Aorta (tissue), 5 donors: ENCODE measurements at regions of chr1 and their contacts with region 1.

Region 1: GRCh38 chr1:202135221-202135721 is 9.3 kb downstream of the ARL8A start:
- DNase-seq: no peak
- ATAC-seq: peak; percentile 84
- H3K4me3 ChIP-seq: no peak overlapping the region
- H3K27ac ChIP-seq: peak overlapping the region in 1 of 2 donors; percentile 36
- H3K4me1 ChIP-seq: no peaks in the 10 kb centered on the region
- H3K27me3 ChIP-seq: no peaks in the 10 kb centered on the region

Region 2: GRCh38 chr1:201888282-201889089 is 246.8 kb before region 1 on chr1 and contains the start of gene SHISA4:
- intact Hi-C with region 1: loop called (anchors 10 kb)
- DNase-seq: peak; percentile 90 to 95
- ATAC-seq: peak; percentile 88
- H3K4me3 ChIP-seq: peak within 1 kb of the TSS; percentile 49 to 73
- H3K27ac ChIP-seq: peak within 1 kb of the TSS; percentile 14 to 85
- H3K4me1 ChIP-seq: peaks cover 0 to 4% of the 10 kb centered on the region in 2 donors
- H3K27me3 ChIP-seq: no peaks in the 10 kb centered on the region
- total RNA-seq, gene SHISA4: 30.6 to 39.9 TPM

Region 3: DNA sequence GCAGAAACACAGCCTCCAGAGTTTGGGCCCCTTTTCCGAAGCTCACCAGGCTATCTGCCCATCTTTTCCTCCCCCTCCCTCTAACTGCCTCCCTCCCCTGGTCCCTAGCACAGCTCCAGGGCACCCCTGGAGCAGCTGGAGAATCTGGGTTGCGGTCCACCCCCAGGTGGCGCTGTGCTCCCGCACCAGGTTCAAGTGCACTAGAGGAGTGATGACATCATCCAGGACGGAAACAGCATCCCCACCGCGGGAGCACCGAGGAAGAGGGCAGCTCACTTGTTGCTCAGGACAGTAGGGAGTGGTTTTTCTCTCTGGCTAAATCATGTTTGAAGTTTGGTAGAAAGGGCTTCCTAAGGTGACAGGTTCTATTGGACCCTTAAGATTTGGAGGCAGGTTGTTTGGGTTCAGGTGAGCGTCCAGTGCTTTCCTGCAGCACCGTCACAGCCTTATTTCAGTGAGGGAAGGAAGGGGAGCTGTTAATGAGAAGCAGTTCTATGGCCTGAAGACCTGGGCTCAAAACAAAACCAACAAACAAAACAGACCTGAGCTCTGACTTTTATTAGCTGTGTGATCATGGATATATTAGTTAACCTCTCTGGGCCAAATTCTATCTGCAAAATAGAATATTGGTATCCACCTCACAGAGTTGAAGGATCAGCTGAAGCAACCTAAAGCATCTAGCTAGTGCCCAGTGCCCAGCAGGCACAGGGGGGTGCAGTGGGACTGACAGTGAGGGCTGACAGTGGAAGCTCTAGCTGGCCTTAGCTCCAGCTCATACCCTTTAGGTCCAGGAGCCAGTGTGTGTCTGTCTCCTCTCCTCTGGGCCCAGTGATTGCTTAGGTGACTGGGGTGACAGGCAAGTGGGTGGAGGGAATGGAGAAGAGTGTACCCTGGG is 239.1 kb before region 1 on chr1:
- intact Hi-C with region 1: loop called in 1 of 2 experiments (anchors 10 kb)
- DNase-seq: peak; percentile 94 to 98
- ATAC-seq: peak; percentile 90
- H3K4me3 ChIP-seq: no peak overlapping the region
- H3K27ac ChIP-seq: peak overlapping the region; percentile 25 to 88
- H3K4me1 ChIP-seq: peaks cover 0 to 6% of the 10 kb centered on the region in 2 donors
- H3K27me3 ChIP-seq: no peaks in the 10 kb centered on the region

Region 4: DNA sequence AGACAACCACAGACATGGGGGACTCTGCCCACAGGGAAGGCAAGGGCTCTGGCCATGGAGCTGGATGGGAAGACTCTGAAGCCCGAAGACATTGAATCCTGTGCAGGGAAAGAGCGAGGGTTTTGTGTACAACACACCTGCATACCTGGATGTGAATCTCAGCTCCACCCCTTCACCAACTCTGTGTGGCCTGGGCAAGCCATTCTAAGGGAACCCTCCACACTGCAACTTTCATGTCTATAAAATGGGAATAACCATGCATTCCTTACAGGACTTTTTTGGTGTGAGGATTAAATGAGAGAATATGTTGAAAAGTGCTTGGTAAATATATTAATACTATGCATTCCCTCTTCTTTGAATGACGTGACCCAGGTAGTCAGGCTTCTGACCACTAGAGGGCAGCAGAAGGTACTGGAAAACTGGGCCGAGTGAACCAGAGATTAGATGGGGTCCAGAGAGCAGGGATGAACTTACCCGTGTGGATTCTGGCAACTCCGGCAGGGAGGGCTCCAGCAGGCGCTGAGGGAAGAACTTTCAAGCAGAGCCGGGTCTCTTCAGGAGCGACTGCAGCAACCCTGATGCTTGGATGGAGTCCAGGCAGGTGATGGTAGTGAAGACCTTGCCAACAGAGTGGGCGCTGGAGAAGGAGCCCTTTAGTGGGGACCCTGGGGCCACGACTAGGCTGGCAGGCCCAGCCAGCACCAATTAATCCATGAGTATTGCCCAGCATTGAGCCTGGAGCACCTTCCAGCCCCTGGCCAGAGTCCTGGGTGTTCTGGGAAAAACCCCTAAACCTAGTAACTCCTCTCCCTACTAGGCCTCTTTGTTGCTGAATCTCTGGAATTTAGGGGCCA is 125.7 kb before region 1 on chr1:
- intact Hi-C with region 1: loop called in 1 of 2 experiments (anchors 5 kb)
- DNase-seq: peak in 1 of 2 donors; percentile 68
- ATAC-seq: peak; percentile 83
- H3K4me3 ChIP-seq: no peak overlapping the region
- H3K27ac ChIP-seq: no peak overlapping the region
- H3K4me1 ChIP-seq: no peaks in the 10 kb centered on the region
- H3K27me3 ChIP-seq: no peaks in the 10 kb centered on the region